MCF 10A (cell line): ENCODE measurements at regions of chr1 and their contacts with region 1.

Region 1: GRCh38 chr1:14055442-14056223 is 355.6 kb downstream of the PRDM2 start:
- DNase-seq: peak; percentile 78
- H3K4me3 Mint-ChIP-seq: peak overlapping the region; percentile 10
- H3K27ac Mint-ChIP-seq: peak overlapping the region; percentile 86
- H3K4me1 Mint-ChIP-seq: peaks cover 35% of the 10 kb centered on the region
- H3K27me3 Mint-ChIP-seq: no peaks in the 10 kb centered on the region
- CTCF ChIP-seq: no peak

Region 2: DNA sequence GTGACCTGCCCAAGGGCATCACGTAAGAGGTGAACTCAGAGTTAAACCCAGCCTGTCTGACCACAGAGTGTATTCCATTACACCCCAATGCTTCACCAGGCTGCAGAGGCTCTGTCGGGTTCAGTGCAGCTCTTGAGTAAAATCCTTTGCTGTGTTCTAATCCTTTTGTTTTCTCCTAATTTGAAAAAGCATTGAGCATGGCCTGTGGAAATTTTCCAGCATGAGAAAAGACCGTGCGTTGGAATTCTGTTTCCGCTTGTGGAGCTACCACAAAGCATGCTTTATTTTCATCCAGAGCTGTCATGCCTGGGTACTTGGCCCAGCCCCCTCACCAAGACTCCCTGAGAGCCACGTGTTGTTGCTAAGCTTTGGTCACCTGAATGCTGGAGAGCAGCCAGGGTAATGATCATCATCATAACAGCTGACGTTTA is 38.1 kb before region 1 on chr1:
- CTCF ChIA-PET with region 1: no interaction called
- POLR2A ChIA-PET with region 1: interaction called, 10 read pairs
- intact Hi-C with region 1: no loop called
- DNase-seq: no peak
- H3K4me3 Mint-ChIP-seq: no peak overlapping the region
- H3K27ac Mint-ChIP-seq: peak overlapping the region; percentile 58
- H3K4me1 Mint-ChIP-seq: peaks cover 55% of the 10 kb centered on the region
- H3K27me3 Mint-ChIP-seq: no peaks in the 10 kb centered on the region
- CTCF ChIP-seq: no peak

Region 3: DNA sequence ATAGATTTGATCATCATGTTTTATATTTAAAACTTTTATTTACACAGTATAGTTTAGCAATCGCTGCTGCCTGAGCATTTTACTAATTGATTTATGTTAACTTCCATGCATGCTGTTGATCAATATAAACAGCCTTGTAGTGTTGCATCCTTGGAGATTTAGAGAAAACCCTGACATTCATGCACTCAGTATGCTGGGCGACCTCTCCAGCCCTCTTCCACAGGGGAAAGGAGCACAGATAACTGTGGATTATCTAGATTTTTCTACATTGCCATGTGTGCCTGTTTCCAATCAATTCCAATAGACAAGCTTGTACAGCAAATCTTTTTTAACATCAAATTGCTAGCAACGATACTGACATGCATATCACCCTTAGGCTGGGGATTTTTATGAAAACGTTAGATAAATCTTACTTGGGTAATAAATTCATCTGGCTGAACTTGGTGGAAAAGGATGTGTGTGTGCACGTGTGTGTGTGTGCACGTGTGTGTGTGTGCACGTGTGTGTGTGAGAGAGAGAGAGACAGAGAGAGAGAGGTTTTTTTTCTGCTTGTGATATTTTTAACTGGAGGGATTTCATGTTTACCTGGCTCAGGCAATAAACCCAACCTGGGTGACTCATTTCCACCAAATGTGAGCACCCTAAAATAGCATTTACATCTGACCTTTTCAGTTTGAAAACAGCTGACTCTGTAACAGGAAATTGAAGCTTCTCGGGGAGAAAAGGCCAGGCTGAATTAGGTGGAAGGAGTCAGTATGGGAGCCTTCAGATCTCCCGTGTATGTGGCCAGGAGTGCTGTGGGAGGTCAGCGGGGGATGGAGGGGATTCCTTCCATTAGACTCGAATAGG is 15.8 kb before region 1 on chr1:
- CTCF ChIA-PET with region 1: interaction called, 3 read pairs
- POLR2A ChIA-PET with region 1: interaction called, 15 read pairs
- intact Hi-C with region 1: no loop called
- DNase-seq: peak; percentile 23
- H3K4me3 Mint-ChIP-seq: peak overlapping the region; percentile 20
- H3K27ac Mint-ChIP-seq: peak overlapping the region; percentile 64
- H3K4me1 Mint-ChIP-seq: peaks cover 26% of the 10 kb centered on the region
- H3K27me3 Mint-ChIP-seq: no peaks in the 10 kb centered on the region
- CTCF ChIP-seq: no peak